Natural killer cell (primary cell): ENCODE measurements at regions of chr4 and their contacts with region 1.

Region 1: GRCh38 chr4:139416073-139416673 is 37.7 kb upstream of the RAB33B start:
- DNase-seq: peak in 1 of 2 donors; percentile 80
- ATAC-seq: peak in 2 of 3 donors; percentile 49 to 57
- H3K4me3 ChIP-seq: no peak overlapping the region
- H3K4me3 Mint-ChIP-seq: no peak overlapping the region
- H3K27ac ChIP-seq: no peak overlapping the region
- H3K27ac Mint-ChIP-seq: no peak overlapping the region
- H3K4me1 ChIP-seq: peaks cover 8% of the 10 kb centered on the region
- H3K4me1 Mint-ChIP-seq: peaks cover 6 to 13% of the 10 kb centered on the region in 2 donors
- H3K27me3 ChIP-seq: no peaks in the 10 kb centered on the region
- H3K27me3 Mint-ChIP-seq: no peaks in the 10 kb centered on the region
- CTCF ChIP-seq: peak; percentile 90

Region 2: DNA sequence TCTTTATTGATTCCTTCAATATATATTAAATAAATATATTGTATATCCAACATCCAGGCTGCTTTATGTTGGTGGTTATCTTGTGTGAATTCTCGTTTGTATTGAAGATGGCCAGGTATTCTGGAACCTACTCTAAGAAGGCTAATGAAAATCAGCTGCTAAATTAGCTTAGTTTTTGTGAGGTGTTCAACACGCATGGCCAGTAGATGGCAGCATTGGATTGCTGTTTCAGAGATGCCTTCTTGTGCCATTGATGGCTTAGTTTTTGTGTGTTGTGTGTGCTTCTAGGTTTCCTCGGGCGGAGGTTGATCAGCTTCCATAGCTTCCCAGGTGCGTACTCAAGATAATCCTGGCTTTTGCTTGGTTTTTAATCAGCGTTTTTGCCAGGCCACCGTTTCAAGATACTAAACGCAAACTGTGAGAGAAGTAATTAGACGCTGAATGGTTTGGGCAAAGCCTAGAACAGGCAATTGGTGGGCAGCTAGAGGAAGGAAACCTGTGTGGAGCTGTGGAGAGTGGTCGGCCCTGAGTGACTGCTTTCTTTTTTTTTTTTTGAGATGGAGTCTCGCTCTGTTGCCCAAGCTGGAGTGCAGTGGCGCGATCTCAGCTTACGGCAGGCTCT is 385.4 kb before region 1 on chr4:
- intact Hi-C with region 1: loop called (anchors 2 kb)
- DNase-seq: peak; percentile 60 to 92
- ATAC-seq: peak; percentile 70 to 94 (median 82)
- H3K4me3 ChIP-seq: no peak overlapping the region
- H3K4me3 Mint-ChIP-seq: no peak overlapping the region
- H3K27ac ChIP-seq: no peak overlapping the region
- H3K27ac Mint-ChIP-seq: peak overlapping the region; percentile 39 to 73
- H3K4me1 ChIP-seq: peaks cover 5% of the 10 kb centered on the region
- H3K4me1 Mint-ChIP-seq: peaks cover 17 to 25% of the 10 kb centered on the region in 2 donors
- H3K27me3 ChIP-seq: no peaks in the 10 kb centered on the region
- H3K27me3 Mint-ChIP-seq: no peaks in the 10 kb centered on the region
- CTCF ChIP-seq: peak; percentile 84

Region 3: DNA sequence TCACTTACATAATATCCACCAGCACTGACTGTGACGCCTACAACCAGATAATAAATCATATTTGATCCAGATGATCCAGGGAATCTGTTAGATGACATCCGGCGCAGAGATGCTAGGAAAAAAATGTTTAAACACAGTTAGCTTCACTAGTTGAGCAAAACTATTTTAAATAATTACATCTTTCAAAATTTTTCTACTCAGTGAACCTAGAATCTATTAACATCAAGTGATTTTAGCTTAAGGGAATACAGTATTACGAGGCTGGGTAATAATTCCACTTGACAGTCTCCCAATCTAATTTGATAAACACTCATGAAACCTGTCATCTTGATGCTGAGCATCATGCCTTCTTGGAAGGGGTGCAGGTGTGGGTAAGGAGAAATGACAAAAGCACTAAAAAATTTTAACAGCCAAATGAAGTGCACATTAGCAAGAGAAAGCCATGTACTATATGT is 140.9 kb before region 1 on chr4:
- intact Hi-C with region 1: no loop called
- DNase-seq: no peak
- ATAC-seq: no peak
- H3K4me3 ChIP-seq: no peak overlapping the region
- H3K4me3 Mint-ChIP-seq: no peak overlapping the region
- H3K27ac ChIP-seq: no peak overlapping the region
- H3K27ac Mint-ChIP-seq: no peak overlapping the region
- H3K4me1 ChIP-seq: peaks cover 17% of the 10 kb centered on the region
- H3K4me1 Mint-ChIP-seq: peaks cover 17 to 18% of the 10 kb centered on the region in 2 donors
- H3K27me3 ChIP-seq: peaks cover 38% of the 10 kb centered on the region
- H3K27me3 Mint-ChIP-seq: peaks cover 24 to 29% of the 10 kb centered on the region in 2 donors
- CTCF ChIP-seq: no peak

Region 4: GRCh38 chr4:139386421-139386820 is 29.8 kb before region 1 on chr4:
- intact Hi-C with region 1: no loop called
- DNase-seq: no peak
- ATAC-seq: no peak
- H3K4me3 ChIP-seq: no peak overlapping the region
- H3K4me3 Mint-ChIP-seq: no peak overlapping the region
- H3K27ac ChIP-seq: no peak overlapping the region
- H3K27ac Mint-ChIP-seq: no peak overlapping the region
- H3K4me1 ChIP-seq: no peaks in the 10 kb centered on the region
- H3K4me1 Mint-ChIP-seq: no peaks in the 10 kb centered on the region
- H3K27me3 ChIP-seq: no peaks in the 10 kb centered on the region
- H3K27me3 Mint-ChIP-seq: no peaks in the 10 kb centered on the region
- CTCF ChIP-seq: no peak